ENCODE measurements at regions of chr2 and their contacts with region 1.

Region 1: GRCh38 chr2:231364961-231365810 is 30.3 kb upstream of the B3GNT7 start:
- DNase-seq: peak; percentile 89
- ATAC-seq: peak; percentile 96
- H3K4me3 ChIP-seq: no peak overlapping the region
- H3K27ac ChIP-seq: peak overlapping the region; percentile 87
- H3K4me1 ChIP-seq: peaks cover 11% of the 10 kb centered on the region
- H3K27me3 ChIP-seq: no peaks in the 10 kb centered on the region
- CTCF ChIP-seq: no peak
- POLR2A ChIP-seq: no peak
- RAD21 ChIP-seq: no peak; the same call in 1 of the 2 replicates

Region 2: GRCh38 chr2:230742781-230743180 is 622.4 kb before region 1 on chr2:
- CTCF ChIA-PET with region 1: no interaction called
- POLR2A ChIA-PET with region 1: interaction called, 19 read pairs
- dilution Hi-C with region 1: no loop called
- in situ Hi-C with region 1: no loop called
- intact Hi-C with region 1: no loop called
- DNase-seq: no peak
- ATAC-seq: no peak
- H3K4me3 ChIP-seq: no peak overlapping the region
- H3K27ac ChIP-seq: no peak overlapping the region
- H3K4me1 ChIP-seq: peaks cover 8% of the 10 kb centered on the region
- H3K27me3 ChIP-seq: no peaks in the 10 kb centered on the region
- CTCF ChIP-seq: no peak
- POLR2A ChIP-seq: no peak
- RAD21 ChIP-seq: no peak